Activated T-helper 1 cell treated with anti-CD3 and anti-CD28 coated beads, Interleukin-12 subunit alpha, Interleukin-12 subunit beta, Interleukin-2, Interleukin-4 antibody, amounts not matched to agents 30 ng/mL and 10 ng/mL and 1 ng/mL, durations not matched to agents 14 hours and 24 hours and 36 hours (primary cell): ENCODE measurements at regions of chr7 and their contacts with region 1.

Region 1: DNA sequence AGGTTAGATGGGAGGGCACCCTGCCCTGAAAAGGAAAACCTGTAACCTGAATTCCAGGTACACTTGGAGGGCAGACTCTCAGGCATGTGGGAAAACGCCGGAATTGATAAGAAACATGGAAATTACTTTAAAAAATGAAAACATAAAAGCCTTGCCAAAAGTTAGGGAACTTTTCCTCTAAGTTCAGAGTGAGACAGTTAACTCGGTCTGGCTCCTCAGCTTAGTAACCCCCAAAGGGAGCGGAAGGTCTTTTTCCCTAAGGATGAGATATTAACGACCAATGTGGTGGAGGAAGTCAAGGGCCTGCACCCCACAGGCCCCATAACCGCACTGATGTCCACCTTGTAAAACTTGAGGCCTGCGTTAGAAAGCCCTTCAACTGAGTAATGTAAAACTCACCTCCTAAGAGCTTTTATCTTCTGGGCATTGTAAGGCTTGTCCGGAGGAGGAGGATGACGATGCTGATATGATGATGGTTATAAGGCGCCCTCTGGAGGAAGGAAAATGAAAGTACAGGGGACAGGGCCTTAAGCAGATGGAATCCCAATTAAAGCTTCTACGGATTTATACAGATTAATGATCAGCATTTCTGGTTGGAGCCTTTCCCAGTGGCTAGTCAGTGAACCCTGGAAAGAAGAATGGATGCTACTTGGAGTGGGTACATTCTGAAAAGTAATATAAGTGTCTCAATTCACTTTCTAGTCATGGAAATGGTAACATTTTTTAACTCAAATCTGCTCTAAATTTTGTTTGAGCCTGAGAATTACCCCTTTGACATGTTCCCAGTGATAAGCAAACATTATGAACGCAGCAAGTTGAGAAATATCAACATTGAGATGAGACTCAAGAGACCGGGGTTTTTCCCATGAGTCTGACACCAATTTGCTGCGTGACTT is 694 bp downstream of the COL1A2 start:
- DNase-seq: peak; percentile 46
- H3K4me3 Mint-ChIP-seq: peak overlapping the region; percentile 86
- H3K27ac Mint-ChIP-seq: peak overlapping the region; percentile 83
- H3K4me1 Mint-ChIP-seq: peaks cover 35% of the 10 kb centered on the region
- H3K27me3 Mint-ChIP-seq: no peaks in the 10 kb centered on the region

Region 2: GRCh38 chr7:93245525-93246432 is 1149.6 kb before region 1 on chr7:
- intact Hi-C with region 1: loop called (anchors 1 kb)
- DNase-seq: no peak
- H3K4me3 Mint-ChIP-seq: no peak overlapping the region
- H3K27ac Mint-ChIP-seq: no peak overlapping the region
- H3K4me1 Mint-ChIP-seq: no peaks in the 10 kb centered on the region
- H3K27me3 Mint-ChIP-seq: peaks cover 2% of the 10 kb centered on the region

Region 3: DNA sequence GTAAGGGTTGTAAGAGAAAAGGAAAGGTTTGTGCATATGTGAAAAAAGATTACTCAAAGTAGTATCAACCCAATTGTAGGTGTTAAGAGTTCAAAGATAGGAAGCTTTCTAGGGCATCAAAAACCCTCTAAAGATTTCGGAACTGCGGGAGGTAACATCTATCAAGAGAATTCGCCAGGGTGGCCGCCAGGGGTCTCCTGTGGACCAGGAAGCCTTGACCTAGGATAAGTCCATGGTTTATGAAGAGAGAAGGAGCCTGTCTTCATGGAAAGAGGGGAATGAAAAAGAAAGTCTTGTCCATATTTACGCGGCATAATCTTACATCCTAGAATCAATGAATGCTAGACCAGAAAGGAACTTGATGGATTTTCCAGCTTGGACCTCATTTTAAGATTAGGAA is 680.2 kb before region 1 on chr7:
- intact Hi-C with region 1: loop called (anchors 1 kb)
- DNase-seq: no peak
- H3K4me3 Mint-ChIP-seq: no peak overlapping the region
- H3K27ac Mint-ChIP-seq: no peak overlapping the region
- H3K4me1 Mint-ChIP-seq: no peaks in the 10 kb centered on the region
- H3K27me3 Mint-ChIP-seq: peaks cover 5% of the 10 kb centered on the region

Region 4: GRCh38 chr7:93902777-93903423 is 492.5 kb before region 1 on chr7:
- intact Hi-C with region 1: loop called (anchors 1 kb)
- DNase-seq: no peak
- H3K4me3 Mint-ChIP-seq: no peak overlapping the region
- H3K27ac Mint-ChIP-seq: no peak overlapping the region
- H3K4me1 Mint-ChIP-seq: no peaks in the 10 kb centered on the region
- H3K27me3 Mint-ChIP-seq: peaks cover 9% of the 10 kb centered on the region

Region 5: DNA sequence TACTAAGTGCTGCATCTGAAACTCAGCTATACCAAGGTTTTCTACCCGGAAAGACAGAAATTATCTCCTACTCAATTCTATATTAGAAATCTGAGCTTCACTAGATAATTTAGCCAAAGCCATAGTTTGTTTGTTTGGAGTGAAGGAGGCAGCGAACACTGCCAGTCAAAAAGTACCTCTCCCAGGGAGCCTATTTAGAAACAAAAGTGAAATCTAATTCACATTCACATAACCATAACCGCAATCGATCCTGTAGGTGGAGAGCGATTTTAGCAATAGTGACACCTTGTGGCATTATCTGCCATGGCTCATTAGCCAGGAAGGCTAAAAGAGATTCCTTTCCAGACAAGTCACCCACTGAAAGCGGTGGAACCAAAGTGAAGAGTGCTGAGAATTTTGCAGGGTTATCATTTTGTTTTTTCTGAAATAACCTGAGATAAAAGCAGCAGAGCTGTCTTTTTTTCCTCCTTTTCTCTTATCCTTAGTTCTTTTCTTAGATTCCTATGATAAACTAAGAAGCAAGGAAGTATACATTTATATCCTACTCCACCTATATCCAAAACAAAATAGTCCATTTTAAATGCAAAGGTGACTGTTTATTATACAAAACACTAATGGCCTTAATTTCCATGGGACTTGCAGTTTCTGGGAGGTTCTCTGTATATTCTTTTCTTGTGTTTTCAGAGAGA is 307.6 kb before region 1 on chr7:
- intact Hi-C with region 1: loop called (anchors 2 kb)
- DNase-seq: peak; percentile 41
- H3K4me3 Mint-ChIP-seq: peak overlapping the region; percentile 48
- H3K27ac Mint-ChIP-seq: no peak overlapping the region
- H3K4me1 Mint-ChIP-seq: peaks cover 7% of the 10 kb centered on the region
- H3K27me3 Mint-ChIP-seq: peaks cover 26% of the 10 kb centered on the region

Region 6: DNA sequence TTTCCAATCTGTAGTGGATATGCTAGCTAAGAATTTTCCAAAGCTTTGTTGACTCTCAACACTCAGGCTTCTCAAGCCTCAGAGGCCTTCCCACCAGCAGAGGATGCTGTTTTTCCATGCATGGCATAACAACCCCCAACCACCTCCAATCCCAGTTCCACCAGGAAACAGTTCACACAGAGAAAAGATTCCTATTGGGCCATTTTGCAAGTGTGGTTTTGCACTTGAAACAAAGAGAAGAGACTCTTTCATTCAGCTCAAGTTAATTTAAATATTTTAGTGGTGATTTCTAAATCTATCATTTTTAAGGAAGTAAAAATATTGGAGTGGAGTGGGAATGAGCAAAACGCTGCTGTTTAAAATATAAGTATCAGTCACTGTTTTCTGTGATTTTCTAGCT is 106.3 kb before region 1 on chr7:
- intact Hi-C with region 1: loop called (anchors 2 kb)
- DNase-seq: no peak
- H3K4me3 Mint-ChIP-seq: no peak overlapping the region
- H3K27ac Mint-ChIP-seq: no peak overlapping the region
- H3K4me1 Mint-ChIP-seq: no peaks in the 10 kb centered on the region
- H3K27me3 Mint-ChIP-seq: peaks cover 12% of the 10 kb centered on the region